Mammary epithelial cell (primary cell): ENCODE measurements at regions of chr18 and their contacts with region 1.

Region 1: GRCh38 chr18:45775241-45775676 is 50.2 kb upstream of the SIGLEC15 start:
- DNase-seq: no peak
- H3K4me3 ChIP-seq: peak overlapping the region in 1 of 3 experiments; percentile 35
- H3K27ac ChIP-seq: peak overlapping the region; percentile 68
- H3K4me1 ChIP-seq: peaks cover 35% of the 10 kb centered on the region
- H3K27me3 ChIP-seq: no peaks in the 10 kb centered on the region
- CTCF ChIP-seq: no peak

Region 2: GRCh38 chr18:45702866-45703265 is 72.4 kb before region 1 on chr18:
- CTCF ChIA-PET with region 1: no interaction called
- dilution Hi-C with region 1: no loop called
- in situ Hi-C with region 1: no loop called
- intact Hi-C with region 1: loop called (anchors 2 kb)
- DNase-seq: no peak
- H3K4me3 ChIP-seq: no peak overlapping the region
- H3K27ac ChIP-seq: no peak overlapping the region
- H3K4me1 ChIP-seq: no peaks in the 10 kb centered on the region
- H3K27me3 ChIP-seq: no peaks in the 10 kb centered on the region
- CTCF ChIP-seq: no peak

Region 3: GRCh38 chr18:45738658-45739057 is 36.6 kb before region 1 on chr18:
- CTCF ChIA-PET with region 1: no interaction called
- dilution Hi-C with region 1: loop called (anchors 5 kb)
- in situ Hi-C with region 1: no loop called
- intact Hi-C with region 1: no loop called
- DNase-seq: no peak
- H3K4me3 ChIP-seq: no peak overlapping the region
- H3K27ac ChIP-seq: no peak overlapping the region
- H3K4me1 ChIP-seq: no peaks in the 10 kb centered on the region
- H3K27me3 ChIP-seq: no peaks in the 10 kb centered on the region
- CTCF ChIP-seq: peak in 1 of 2 donors; percentile 23

Region 4: GRCh38 chr18:45850021-45850420 is 74.8 kb after region 1 on chr18:
- CTCF ChIA-PET with region 1: no interaction called
- dilution Hi-C with region 1: loop called (anchors 5 kb)
- in situ Hi-C with region 1: no loop called
- intact Hi-C with region 1: no loop called
- DNase-seq: no peak
- H3K4me3 ChIP-seq: no peak overlapping the region
- H3K27ac ChIP-seq: no peak overlapping the region
- H3K4me1 ChIP-seq: no peaks in the 10 kb centered on the region
- H3K27me3 ChIP-seq: no peaks in the 10 kb centered on the region
- CTCF ChIP-seq: peak; percentile 37 to 42